GM12878 (cell line): ENCODE measurements at regions of chr3 and their contacts with region 1.

Region 1: GRCh38 chr3:58116161-58116955 is 94.4 kb downstream of the DNASE1L3 start:
- DNase-seq: peak; percentile 83
- ATAC-seq: peak; percentile 90
- H3K4me3 ChIP-seq: no peak overlapping the region
- H3K27ac ChIP-seq: peak overlapping the region; percentile 47
- H3K4me1 ChIP-seq: peaks cover 36% of the 10 kb centered on the region
- H3K27me3 ChIP-seq: no peaks in the 10 kb centered on the region
- CTCF ChIP-seq: no peak
- EP300 ChIP-seq: peak in 1 of 2 experiments; percentile 70; a peak in 1 of 4 replicates
- POLR2A ChIP-seq: no peak
- RAD21 ChIP-seq: no peak

Region 2: GRCh38 chr3:57803647-57804081 is 312.7 kb before region 1 on chr3:
- CTCF ChIA-PET with region 1: no interaction called
- POLR2A ChIA-PET with region 1: no interaction called
- RAD21 ChIA-PET with region 1: no interaction called
- SMC1A ChIA-PET with region 1: no interaction called
- in situ Hi-C with region 1: no loop called
- intact Hi-C with region 1: no loop called
- DNase-seq: no peak
- ATAC-seq: peak; percentile 66
- H3K4me3 ChIP-seq: no peak overlapping the region
- H3K27ac ChIP-seq: peak overlapping the region; percentile 34
- H3K4me1 ChIP-seq: no peaks in the 10 kb centered on the region; the same call in 1 of the 2 replicates
- H3K27me3 ChIP-seq: no peaks in the 10 kb centered on the region
- CTCF ChIP-seq: no peak
- EP300 ChIP-seq: no peak
- POLR2A ChIP-seq: no peak
- RAD21 ChIP-seq: no peak

Region 3: GRCh38 chr3:57889807-57890206 is 226.6 kb before region 1 on chr3:
- CTCF ChIA-PET with region 1: no interaction called
- POLR2A ChIA-PET with region 1: no interaction called
- RAD21 ChIA-PET with region 1: no interaction called
- SMC1A ChIA-PET with region 1: no interaction called
- in situ Hi-C with region 1: no loop called
- intact Hi-C with region 1: no loop called
- DNase-seq: no peak
- ATAC-seq: no peak
- H3K4me3 ChIP-seq: no peak overlapping the region
- H3K27ac ChIP-seq: no peak overlapping the region
- H3K4me1 ChIP-seq: no peaks in the 10 kb centered on the region
- H3K27me3 ChIP-seq: no peaks in the 10 kb centered on the region
- CTCF ChIP-seq: no peak
- EP300 ChIP-seq: no peak
- POLR2A ChIP-seq: no peak
- RAD21 ChIP-seq: no peak

Region 4: GRCh38 chr3:57992452-57993213 is 123.7 kb before region 1 on chr3:
- CTCF ChIA-PET with region 1: no interaction called
- POLR2A ChIA-PET with region 1: no interaction called
- RAD21 ChIA-PET with region 1: no interaction called
- SMC1A ChIA-PET with region 1: no interaction called
- in situ Hi-C with region 1: no loop called
- intact Hi-C with region 1: no loop called
- DNase-seq: no peak
- ATAC-seq: no peak
- H3K4me3 ChIP-seq: no peak overlapping the region
- H3K27ac ChIP-seq: no peak overlapping the region
- H3K4me1 ChIP-seq: no peaks in the 10 kb centered on the region
- H3K27me3 ChIP-seq: no peaks in the 10 kb centered on the region
- CTCF ChIP-seq: no peak
- EP300 ChIP-seq: no peak
- POLR2A ChIP-seq: no peak
- RAD21 ChIP-seq: no peak

Region 5: GRCh38 chr3:58008140-58009025 is 108.0 kb before region 1 on chr3 and contains the start of gene FLNB:
- CTCF ChIA-PET with region 1: interaction called, 14 read pairs
- POLR2A ChIA-PET with region 1: interaction called, 6 read pairs
- RAD21 ChIA-PET with region 1: interaction called, 19 read pairs
- SMC1A ChIA-PET with region 1: interaction called, 34 read pairs
- in situ Hi-C with region 1: no loop called
- intact Hi-C with region 1: no loop called
- DNase-seq: no peak
- ATAC-seq: peak; percentile 81
- H3K4me3 ChIP-seq: peak within 1 kb of the TSS; percentile 77
- H3K27ac ChIP-seq: peak within 1 kb of the TSS; percentile 45
- H3K4me1 ChIP-seq: peaks cover 16% of the 10 kb centered on the region
- H3K27me3 ChIP-seq: no peaks in the 10 kb centered on the region
- CTCF ChIP-seq: peak; percentile 72 to 95 (median 90)
- EP300 ChIP-seq: no peak
- POLR2A ChIP-seq: peak; percentile 90
- RAD21 ChIP-seq: peak; percentile 91
- polyA plus RNA-seq, gene FLNB: 13.6 to 15.8 TPM

Region 6: GRCh38 chr3:58018892-58019742 is 97.2 kb before region 1 on chr3:
- CTCF ChIA-PET with region 1: interaction called, 10 read pairs
- POLR2A ChIA-PET with region 1: interaction called, 4 read pairs
- RAD21 ChIA-PET with region 1: interaction called, 7 read pairs
- SMC1A ChIA-PET with region 1: interaction called, 34 read pairs
- in situ Hi-C with region 1: no loop called
- intact Hi-C with region 1: no loop called
- DNase-seq: no peak
- ATAC-seq: peak; percentile 25
- H3K4me3 ChIP-seq: no peak overlapping the region
- H3K27ac ChIP-seq: 0 out of 2 replicates have a peak overlapping the region, but pooled peaks have one; percentile 20
- H3K4me1 ChIP-seq: peaks cover 13% of the 10 kb centered on the region
- H3K27me3 ChIP-seq: no peaks in the 10 kb centered on the region
- CTCF ChIP-seq: no peak
- EP300 ChIP-seq: no peak
- POLR2A ChIP-seq: no peak
- RAD21 ChIP-seq: no peak

Region 7: GRCh38 chr3:58034738-58035523 is 81.4 kb before region 1 on chr3:
- CTCF ChIA-PET with region 1: interaction called, 6 read pairs
- POLR2A ChIA-PET with region 1: interaction called, 5 read pairs
- RAD21 ChIA-PET with region 1: interaction called, 23 read pairs
- SMC1A ChIA-PET with region 1: interaction called, 21 read pairs
- in situ Hi-C with region 1: no loop called
- intact Hi-C with region 1: loop called (anchors 5 kb)
- DNase-seq: peak; percentile 96
- ATAC-seq: peak; percentile 96
- H3K4me3 ChIP-seq: peak overlapping the region; percentile 8; the same call in 1 of the 2 replicates
- H3K27ac ChIP-seq: peak overlapping the region; percentile 85
- H3K4me1 ChIP-seq: peaks cover 44% of the 10 kb centered on the region
- H3K27me3 ChIP-seq: no peaks in the 10 kb centered on the region
- CTCF ChIP-seq: no peak
- EP300 ChIP-seq: peak; percentile 92 to 96
- POLR2A ChIP-seq: no peak
- RAD21 ChIP-seq: no peak

Region 8: GRCh38 chr3:58073301-58074108 is 42.9 kb before region 1 on chr3:
- CTCF ChIA-PET with region 1: interaction called, 5 read pairs
- POLR2A ChIA-PET with region 1: interaction called, 3 read pairs
- RAD21 ChIA-PET with region 1: interaction called, 6 read pairs
- SMC1A ChIA-PET with region 1: interaction called, 13 read pairs
- in situ Hi-C with region 1: no loop called
- intact Hi-C with region 1: no loop called
- DNase-seq: no peak
- ATAC-seq: peak; percentile 77
- H3K4me3 ChIP-seq: no peak overlapping the region; the same call in 1 of the 2 replicates
- H3K27ac ChIP-seq: peak overlapping the region; percentile 45
- H3K4me1 ChIP-seq: peaks cover 22% of the 10 kb centered on the region
- H3K27me3 ChIP-seq: no peaks in the 10 kb centered on the region
- CTCF ChIP-seq: no peak
- EP300 ChIP-seq: 0 out of 4 replicates have a peak, but pooled peaks of 1 of the 2 experiments have one; percentile 13
- POLR2A ChIP-seq: no peak
- RAD21 ChIP-seq: no peak

Region 9: DNA sequence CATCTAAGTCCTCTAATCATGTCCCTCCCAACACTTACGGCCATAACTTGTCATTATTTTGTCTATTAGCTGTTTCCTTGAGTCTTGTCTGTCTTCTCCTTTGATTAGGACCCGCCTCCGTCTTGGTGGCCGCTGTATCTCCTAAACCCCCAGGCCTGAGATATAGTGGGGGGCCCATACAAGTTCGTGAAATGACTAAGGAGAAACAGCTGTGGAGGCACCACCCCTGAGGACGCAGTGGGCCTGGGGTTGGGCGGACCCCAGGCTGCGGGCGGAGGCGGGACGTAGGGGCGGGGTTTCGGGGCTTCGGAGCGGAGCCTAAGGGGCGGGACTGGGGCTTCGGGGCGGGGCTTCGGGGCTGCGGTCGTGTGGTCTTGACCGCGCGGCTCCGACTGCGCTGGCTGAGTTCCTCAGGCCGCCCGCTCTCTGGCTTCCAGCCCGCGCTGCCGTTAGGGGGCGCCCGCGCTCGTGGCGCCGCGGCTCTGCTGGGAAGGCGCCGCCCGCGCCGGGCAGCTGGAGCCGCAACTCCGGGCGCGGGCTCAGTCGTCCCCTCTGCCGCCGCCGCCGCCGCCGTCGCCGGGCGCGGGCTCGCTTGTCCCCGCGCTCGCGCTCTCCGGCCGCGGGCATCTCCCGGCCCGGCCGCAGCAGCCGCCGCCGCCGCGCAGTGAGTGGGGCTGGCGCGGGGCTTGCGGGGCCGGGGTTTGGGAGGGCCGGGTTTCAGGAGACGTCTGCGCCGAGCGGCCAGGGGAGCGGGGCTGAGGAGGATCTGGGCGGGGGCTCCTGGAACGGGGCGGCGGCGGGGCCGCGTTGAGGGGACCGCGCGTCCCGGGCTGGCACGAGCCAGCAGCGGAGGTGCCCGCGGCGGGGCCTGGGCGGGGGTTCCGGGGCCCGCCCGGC is 375.4 kb after region 1 on chr3 and contains the start of gene KCTD6:
- CTCF ChIA-PET with region 1: no interaction called
- POLR2A ChIA-PET with region 1: no interaction called
- RAD21 ChIA-PET with region 1: no interaction called
- SMC1A ChIA-PET with region 1: no interaction called
- in situ Hi-C with region 1: no loop called
- intact Hi-C with region 1: no loop called
- DNase-seq: peak; percentile 57
- ATAC-seq: peak; percentile 97
- H3K4me3 ChIP-seq: peak within 1 kb of the TSS; percentile 78
- H3K27ac ChIP-seq: no peak within 1 kb of the TSS
- H3K4me1 ChIP-seq: peaks cover 5% of the 10 kb centered on the region
- H3K27me3 ChIP-seq: peaks cover 0 to 1% of the 10 kb centered on the region in 2 experiments; a peak in 3 of 4 replicates
- CTCF ChIP-seq: peak; percentile 62 to 93 (median 78); a peak in 5 of 6 replicates
- EP300 ChIP-seq: peak in 1 of 2 experiments; percentile 40; a peak in 1 of 4 replicates
- POLR2A ChIP-seq: 0 out of 2 replicates have a peak, but pooled peaks have one; percentile 25
- RAD21 ChIP-seq: peak; percentile 59
- polyA plus RNA-seq, gene KCTD6: 9.1 to 9.4 TPM